Dorsolateral prefrontal cortex (tissue), 120 donors: ENCODE measurements at regions of chr1 and their contacts with region 1.

Region 1: DNA sequence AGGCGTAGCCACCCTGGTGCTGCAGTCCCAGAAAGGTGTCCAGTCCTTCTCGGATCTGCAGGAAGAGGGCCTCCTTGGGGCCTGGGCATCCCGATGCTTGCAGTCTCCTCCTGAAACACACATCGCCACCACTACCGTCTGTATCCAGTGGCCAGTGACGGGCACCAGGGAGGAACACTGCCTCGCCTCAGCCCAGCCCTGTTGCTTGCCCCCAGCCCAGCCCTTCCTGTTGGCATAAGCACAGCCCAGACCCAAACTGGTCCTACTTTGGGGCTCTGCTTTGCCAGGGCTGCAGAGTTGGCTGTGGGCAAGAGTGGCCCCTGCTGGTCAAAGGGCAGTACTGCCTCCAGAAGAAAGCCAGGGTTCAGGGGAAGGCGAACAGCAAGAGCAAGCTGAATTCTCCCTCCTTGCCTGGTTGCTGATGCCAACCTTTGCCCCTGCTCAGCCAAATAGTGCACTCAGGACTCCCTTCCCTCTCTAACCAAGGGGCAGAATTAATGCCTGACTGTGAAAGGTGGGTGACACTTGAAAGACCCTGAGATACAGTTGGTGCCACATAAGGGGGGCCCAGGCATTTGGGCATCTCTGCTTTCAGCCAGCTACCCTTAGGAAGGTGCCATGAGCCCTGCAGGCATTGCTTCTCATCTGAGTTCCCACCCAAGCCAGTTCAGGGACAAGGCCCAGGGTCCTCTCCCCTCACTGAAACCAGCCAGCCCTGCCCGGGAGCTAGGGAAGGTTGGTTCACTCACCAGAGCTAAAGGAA is 11.1 kb upstream of the ARHGEF2 start:
- DNase-seq: peak; percentile 70 to 87 (median 82)
- H3K4me3 ChIP-seq: peak overlapping the region; percentile 27 to 77 (median 59)
- H3K27ac ChIP-seq: peak overlapping the region in 58 of 59 donors; percentile 39 to 94 (median 85)
- H3K27me3 ChIP-seq: no peaks in the 10 kb centered on the region
- CTCF ChIP-seq: peak in 55 of 56 donors; percentile 96 to 100 (median 99)

Region 2: GRCh38 chr1:155934097-155934935 is 55.1 kb before region 1 on chr1 and contains the start of gene KHDC4:
- intact Hi-C with region 1: loop called (anchors 2 kb)
- DNase-seq: peak; percentile 92 to 98 (median 96)
- H3K4me3 ChIP-seq: peak within 1 kb of the TSS; percentile 65 to 100 (median 93)
- H3K27ac ChIP-seq: peak within 1 kb of the TSS; percentile 65 to 99 (median 95)
- H3K27me3 ChIP-seq: no peaks in the 10 kb centered on the region
- CTCF ChIP-seq: peak in 49 of 56 donors; percentile 5 to 66 (median 35)
- total RNA-seq, gene KHDC4: 33.7 to 80.2 (median 50.9) TPM

Region 3: DNA sequence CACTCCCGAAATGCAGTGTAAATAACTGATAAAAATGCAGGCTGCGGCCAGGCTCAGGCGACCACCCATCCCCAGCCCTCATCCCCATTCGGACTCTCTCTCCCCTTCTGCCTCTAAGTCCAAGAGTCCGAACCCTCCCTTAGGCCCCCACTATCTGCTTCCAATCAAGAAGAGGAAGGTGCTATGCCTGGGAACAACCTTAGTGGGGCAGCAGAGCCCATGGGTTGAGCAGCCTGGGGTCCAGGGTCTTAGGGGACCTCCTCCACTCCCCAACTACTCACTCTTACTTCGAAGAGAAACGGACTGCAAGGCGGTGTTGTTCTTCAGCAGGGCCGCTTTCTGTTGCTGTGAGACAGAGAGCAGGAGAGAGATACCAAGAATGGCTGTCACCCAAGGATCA is 23.3 kb before region 1 on chr1:
- intact Hi-C with region 1: loop called in 1 of 2 experiments (anchors 1 kb)
- DNase-seq: no peak
- H3K4me3 ChIP-seq: peak overlapping the region in 51 of 59 donors; percentile 5 to 69 (median 56)
- H3K27ac ChIP-seq: peak overlapping the region; percentile 82 to 100 (median 99)
- H3K27me3 ChIP-seq: no peaks in the 10 kb centered on the region
- CTCF ChIP-seq: peak in 53 of 56 donors; percentile 25 to 69 (median 51)

Region 4: DNA sequence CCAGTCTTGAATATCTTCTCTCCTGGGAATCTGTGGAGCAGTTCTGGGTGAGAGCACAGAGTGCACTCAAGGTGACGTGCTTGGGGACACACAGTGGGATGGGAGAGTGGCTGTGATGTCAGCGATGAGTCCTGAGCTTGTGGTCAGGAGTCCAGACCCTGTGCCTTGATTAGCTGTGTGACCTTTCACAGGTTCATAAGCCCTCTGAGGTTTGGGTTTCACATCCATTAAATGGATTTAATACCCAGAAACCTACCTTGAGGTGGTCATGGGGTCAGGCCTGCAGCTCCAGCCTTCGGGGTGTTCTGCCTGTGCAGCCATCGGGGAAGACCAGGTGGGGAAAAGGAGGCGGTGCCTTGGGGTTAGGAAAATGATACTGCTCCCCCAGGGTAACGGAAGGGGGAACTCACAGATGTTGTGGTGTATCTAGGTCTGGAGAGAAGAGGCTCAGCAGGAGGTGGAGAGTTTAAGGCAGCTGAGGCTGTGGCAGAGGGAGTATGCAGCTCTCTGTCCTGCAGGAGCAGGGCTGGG is 1187.2 kb after region 1 on chr1:
- intact Hi-C with region 1: no loop called
- DNase-seq: no peak
- H3K4me3 ChIP-seq: no peak overlapping the region
- H3K27ac ChIP-seq: no peak overlapping the region
- H3K27me3 ChIP-seq: peaks cover 0 to 5% (median 0%) of the 10 kb centered on the region in 45 donors
- CTCF ChIP-seq: no peak